ENCODE measurements at regions of chr12 and their contacts with region 1.

Region 1: GRCh38 chr12:19186722-19187661 is 57.5 kb downstream of the PLEKHA5 start:
- DNase-seq: no peak
- H3K4me3 ChIP-seq: no peak overlapping the region
- H3K27ac ChIP-seq: no peak overlapping the region
- H3K4me1 ChIP-seq: peaks cover 8% of the 10 kb centered on the region
- H3K27me3 ChIP-seq: no peaks in the 10 kb centered on the region
- CTCF ChIP-seq: peak; percentile 36 to 69 (median 55)
- EP300 ChIP-seq: no peak
- POLR2A ChIP-seq: no peak

Region 2: DNA sequence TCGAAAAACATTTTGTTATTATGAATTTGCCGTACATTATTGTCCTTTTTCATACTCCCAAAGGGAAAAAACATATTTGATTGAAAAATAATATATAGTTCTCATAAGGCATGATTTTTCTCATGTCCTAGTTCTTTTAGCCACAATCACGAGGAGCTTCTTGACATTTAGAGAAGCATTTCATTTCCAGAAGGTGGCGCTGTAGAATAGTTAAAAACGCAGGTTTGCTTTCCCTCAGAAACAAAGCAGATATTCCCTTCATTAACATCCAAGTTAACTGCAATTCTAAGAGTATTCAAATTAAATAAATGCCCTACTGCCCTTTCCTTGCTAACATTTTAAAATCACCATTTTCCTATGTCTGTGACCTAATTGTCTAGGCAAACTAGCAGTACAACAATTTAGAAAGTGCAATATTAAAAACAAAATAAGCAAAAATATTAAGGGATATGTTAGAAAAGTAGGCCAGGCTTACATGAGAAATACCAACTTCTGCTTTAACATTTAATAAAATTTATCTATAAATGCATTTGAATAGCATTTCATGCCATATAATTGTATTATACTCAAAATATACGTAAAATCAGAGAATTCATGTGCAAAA is 936.6 kb before region 1 on chr12:
- intact Hi-C with region 1: loop called in 2 of 4 experiments (anchors 10 kb)
- DNase-seq: peak in 1 of 5 donors; percentile 25
- H3K4me3 ChIP-seq: no peak overlapping the region
- H3K27ac ChIP-seq: no peak overlapping the region
- H3K4me1 ChIP-seq: no peaks in the 10 kb centered on the region
- H3K27me3 ChIP-seq: no peaks in the 10 kb centered on the region
- CTCF ChIP-seq: peak; percentile 42 to 72 (median 61)
- EP300 ChIP-seq: no peak
- POLR2A ChIP-seq: no peak

Region 3: DNA sequence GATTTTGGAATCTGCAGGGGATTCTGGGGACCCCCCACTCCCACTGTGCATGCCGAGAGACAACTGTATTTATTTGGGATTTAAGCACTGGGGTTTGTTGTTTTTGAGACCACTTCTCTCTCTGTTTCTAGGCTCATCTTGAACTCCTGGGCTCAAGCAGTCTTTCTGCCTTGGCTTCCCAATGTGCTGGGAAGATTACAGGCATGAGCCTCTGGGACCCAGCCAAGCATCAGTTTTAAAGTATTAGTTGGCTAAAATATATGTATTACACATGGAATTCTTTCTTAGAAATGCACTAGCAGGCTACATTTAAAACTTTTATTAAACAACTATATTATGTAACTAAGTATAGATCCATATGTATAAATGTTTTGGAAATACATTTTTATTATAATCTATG is 330.6 kb after region 1 on chr12:
- intact Hi-C with region 1: no loop called
- DNase-seq: no peak
- H3K4me3 ChIP-seq: no peak overlapping the region
- H3K27ac ChIP-seq: no peak overlapping the region
- H3K4me1 ChIP-seq: no peaks in the 10 kb centered on the region
- H3K27me3 ChIP-seq: no peaks in the 10 kb centered on the region
- CTCF ChIP-seq: no peak
- EP300 ChIP-seq: no peak
- POLR2A ChIP-seq: no peak